ENCODE measurements at regions of chr19 and their contacts with region 1.

Region 1: DNA sequence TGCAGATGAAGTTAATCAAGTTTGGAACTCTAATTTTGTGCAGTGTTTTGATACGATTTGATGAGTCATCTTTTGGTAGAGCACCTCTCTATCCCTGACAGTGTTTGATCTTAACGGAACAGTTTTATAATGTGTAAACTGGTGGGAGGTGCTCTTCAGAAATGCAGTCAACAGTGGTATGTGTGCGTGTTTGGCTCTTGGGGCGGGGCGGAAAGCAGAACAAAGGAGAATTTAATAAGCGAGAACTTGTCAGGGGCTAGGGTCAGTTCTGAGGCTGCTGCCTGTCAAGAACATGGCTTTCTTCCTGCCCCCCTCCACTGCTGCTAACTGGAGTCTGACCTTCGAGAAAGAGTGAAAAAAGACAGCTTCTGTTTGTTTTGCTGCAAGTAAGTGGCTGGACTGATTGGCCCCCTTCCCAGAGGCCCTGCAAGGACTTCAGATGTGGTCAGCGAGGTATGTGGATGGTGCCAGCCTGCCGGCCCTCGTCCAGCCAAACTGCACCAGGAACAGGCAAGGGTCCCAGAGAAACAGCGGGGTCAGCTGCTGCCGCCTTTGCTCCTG is 40.8 kb downstream of the BBC3 start:
- DNase-seq: no peak
- H3K4me3 ChIP-seq: peak overlapping the region; percentile 1 to 10 (median 5)
- H3K27ac ChIP-seq: peak overlapping the region; percentile 74 to 83 (median 80)
- H3K4me1 ChIP-seq: peaks cover 23 to 58% (median 52%) of the 10 kb centered on the region in 4 donors
- H3K27me3 ChIP-seq: no peaks in the 10 kb centered on the region
- CTCF ChIP-seq: no peak
- EP300 ChIP-seq: no peak
- POLR2A ChIP-seq: no peak

Region 2: DNA sequence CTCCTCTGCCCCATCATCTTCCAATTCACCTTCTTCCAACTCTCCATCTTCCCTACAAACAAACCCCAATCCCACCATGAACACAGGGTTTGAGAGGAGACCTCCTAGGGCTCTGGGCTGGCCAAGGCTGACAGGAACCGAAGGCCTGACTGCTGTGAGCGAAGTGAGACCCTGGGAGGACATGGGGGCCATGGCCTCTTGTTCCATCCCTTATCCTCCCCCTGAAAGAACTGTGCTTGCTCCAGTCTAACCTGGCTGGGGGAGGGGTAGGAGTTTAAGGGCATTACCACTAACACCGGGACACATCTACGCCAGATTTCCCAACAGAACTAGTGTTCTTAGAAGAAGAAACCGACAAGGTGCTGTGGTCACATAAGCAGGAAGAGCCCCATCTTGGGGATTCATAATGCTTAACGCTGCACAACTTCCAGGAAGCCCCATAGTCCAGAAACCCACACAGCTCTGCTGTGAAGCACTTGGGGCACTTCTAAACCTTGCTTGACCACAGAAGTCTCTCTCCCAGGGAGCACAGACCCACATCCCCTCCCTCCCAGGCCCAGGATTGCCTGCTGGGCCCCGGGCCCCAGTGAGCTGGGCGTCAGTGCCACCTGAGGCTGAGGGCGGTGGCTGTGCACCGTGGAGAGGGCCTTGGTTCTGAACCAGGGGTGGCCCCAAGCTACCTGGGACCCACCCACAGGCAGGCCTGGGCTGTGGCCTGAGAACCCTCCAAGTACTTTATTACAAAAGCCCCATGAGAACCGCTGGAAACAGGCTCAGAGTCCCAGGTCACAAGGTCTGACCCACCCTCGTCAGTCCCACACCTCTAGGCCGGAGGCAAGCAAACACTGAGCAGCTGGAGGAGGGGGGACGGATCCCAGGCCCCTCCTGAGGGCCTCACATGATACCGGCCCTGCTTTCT is 95.4 kb before region 1 on chr19:
- intact Hi-C with region 1: no loop called
- DNase-seq: no peak
- H3K4me3 ChIP-seq: no peak overlapping the region
- H3K27ac ChIP-seq: peak overlapping the region in 3 of 4 donors; percentile 1 to 48 (median 23)
- H3K4me1 ChIP-seq: peaks cover 41 to 73% (median 61%) of the 10 kb centered on the region in 4 donors
- H3K27me3 ChIP-seq: no peaks in the 10 kb centered on the region
- CTCF ChIP-seq: no peak
- EP300 ChIP-seq: no peak
- POLR2A ChIP-seq: no peak

Region 3: GRCh38 chr19:47145639-47146486 is 44.4 kb before region 1 on chr19:
- intact Hi-C with region 1: loop called (anchors 5 kb)
- DNase-seq: no peak
- H3K4me3 ChIP-seq: no peak overlapping the region
- H3K27ac ChIP-seq: peak overlapping the region in 3 of 4 donors; percentile 20 to 79 (median 31)
- H3K4me1 ChIP-seq: peaks cover 6 to 53% (median 53%) of the 10 kb centered on the region in 4 donors
- H3K27me3 ChIP-seq: no peaks in the 10 kb centered on the region
- CTCF ChIP-seq: no peak
- EP300 ChIP-seq: no peak
- POLR2A ChIP-seq: no peak

Region 4: GRCh38 chr19:47243776-47244547 is 53.7 kb after region 1 on chr19:
- intact Hi-C with region 1: no loop called
- DNase-seq: peak; percentile 97
- H3K4me3 ChIP-seq: peak overlapping the region; percentile 44 to 61 (median 48)
- H3K27ac ChIP-seq: peak overlapping the region; percentile 84 to 89 (median 88)
- H3K4me1 ChIP-seq: peaks cover 36 to 60% (median 55%) of the 10 kb centered on the region in 4 donors
- H3K27me3 ChIP-seq: no peaks in the 10 kb centered on the region
- CTCF ChIP-seq: peak; percentile 100
- EP300 ChIP-seq: no peak
- POLR2A ChIP-seq: no peak

Measured in esophagus muscularis mucosa (tissue), 4 donors.